Activated naive CD8-positive, alpha-beta T cell treated with anti-CD3 and anti-CD28 coated beads, Interleukin-2, amount 10 ng/mL, durations not matched to agents 7 days and 5 days (primary cell): ENCODE measurements at regions of chr19 and their contacts with region 1.

Region 1: DNA sequence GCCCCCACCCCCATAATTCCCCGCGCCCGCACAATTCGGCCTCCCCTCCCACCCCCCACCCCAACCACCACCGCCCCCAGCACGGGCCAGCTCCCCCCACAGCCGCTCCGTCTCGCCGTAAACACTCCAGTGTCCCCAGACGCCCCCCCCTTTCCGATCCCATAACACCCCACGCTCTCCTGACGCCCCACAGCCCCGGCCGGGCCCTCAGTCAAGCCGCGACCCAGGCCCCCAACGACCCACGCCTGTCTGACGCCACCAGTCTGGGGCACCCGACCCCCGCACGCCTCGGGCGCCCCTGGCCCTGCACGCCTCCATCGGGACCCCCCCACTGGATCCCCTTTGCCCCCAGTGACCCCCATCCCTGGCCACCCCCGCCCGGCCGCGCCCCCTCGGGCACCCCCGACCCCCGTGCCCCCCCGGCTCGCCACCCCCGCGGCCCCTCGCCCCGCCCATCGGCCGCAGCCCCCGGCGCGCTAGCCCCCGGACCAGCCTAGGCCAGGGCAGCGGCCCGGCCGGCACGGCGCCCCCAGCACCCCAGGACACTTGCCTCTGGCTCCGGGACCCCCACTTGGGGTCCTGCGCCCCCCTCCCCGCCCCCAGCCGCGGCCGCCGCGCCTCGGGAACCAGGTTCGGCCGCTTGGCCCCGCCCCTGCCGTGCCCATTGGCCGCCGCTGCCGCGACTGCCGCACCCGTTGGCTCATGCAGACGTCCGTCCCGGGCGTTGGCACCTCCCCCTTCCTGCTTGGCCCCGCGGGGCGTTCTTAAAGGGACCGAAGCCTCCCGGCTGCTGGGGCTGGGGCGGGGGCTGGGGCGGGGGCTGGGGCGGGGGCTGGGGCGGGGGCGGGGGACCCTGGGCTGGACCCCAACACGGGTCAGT is at the start of gene FKBP8:
- DNase-seq: peak; percentile 96
- ATAC-seq: peak; percentile 92
- H3K4me3 Mint-ChIP-seq: peak within 1 kb of the TSS; percentile 95
- H3K27ac Mint-ChIP-seq: peak within 1 kb of the TSS; percentile 99
- H3K4me1 Mint-ChIP-seq: peaks cover 10% of the 10 kb centered on the region
- H3K27me3 Mint-ChIP-seq: no peaks in the 10 kb centered on the region
- total RNA-seq, gene FKBP8: 261 to 275 TPM

Region 2: GRCh38 chr19:18571564-18572300 is 28.6 kb after region 1 on chr19 and contains the start of gene UBA52:
- POLR2A ChIA-PET with region 1: interaction called, 25 read pairs
- DNase-seq: peak; percentile 100
- ATAC-seq: peak; percentile 93
- H3K4me3 Mint-ChIP-seq: peak within 1 kb of the TSS; percentile 97
- H3K27ac Mint-ChIP-seq: peak within 1 kb of the TSS; percentile 92
- H3K4me1 Mint-ChIP-seq: peaks cover 16% of the 10 kb centered on the region
- H3K27me3 Mint-ChIP-seq: no peaks in the 10 kb centered on the region
- total RNA-seq, gene UBA52: 1,538 to 1,547 TPM